Activated CD8-positive, alpha-beta T cell treated with anti-CD3 and anti-CD28 coated beads, Interleukin-2, amount 10 ng/mL, durations not matched to agents 7 days and 5 days (primary cell): ENCODE measurements at regions of chr11 and their contacts with region 1.

Region 1: GRCh38 chr11:75142714-75143419 is 8.0 kb upstream of the SLCO2B1 start:
- DNase-seq: peak; percentile 86
- ATAC-seq: peak; percentile 86
- H3K4me3 Mint-ChIP-seq: peak overlapping the region; percentile 42
- H3K27ac Mint-ChIP-seq: peak overlapping the region; percentile 89
- H3K4me1 Mint-ChIP-seq: peaks cover 58% of the 10 kb centered on the region
- H3K27me3 Mint-ChIP-seq: peaks cover 22% of the 10 kb centered on the region

Region 2: DNA sequence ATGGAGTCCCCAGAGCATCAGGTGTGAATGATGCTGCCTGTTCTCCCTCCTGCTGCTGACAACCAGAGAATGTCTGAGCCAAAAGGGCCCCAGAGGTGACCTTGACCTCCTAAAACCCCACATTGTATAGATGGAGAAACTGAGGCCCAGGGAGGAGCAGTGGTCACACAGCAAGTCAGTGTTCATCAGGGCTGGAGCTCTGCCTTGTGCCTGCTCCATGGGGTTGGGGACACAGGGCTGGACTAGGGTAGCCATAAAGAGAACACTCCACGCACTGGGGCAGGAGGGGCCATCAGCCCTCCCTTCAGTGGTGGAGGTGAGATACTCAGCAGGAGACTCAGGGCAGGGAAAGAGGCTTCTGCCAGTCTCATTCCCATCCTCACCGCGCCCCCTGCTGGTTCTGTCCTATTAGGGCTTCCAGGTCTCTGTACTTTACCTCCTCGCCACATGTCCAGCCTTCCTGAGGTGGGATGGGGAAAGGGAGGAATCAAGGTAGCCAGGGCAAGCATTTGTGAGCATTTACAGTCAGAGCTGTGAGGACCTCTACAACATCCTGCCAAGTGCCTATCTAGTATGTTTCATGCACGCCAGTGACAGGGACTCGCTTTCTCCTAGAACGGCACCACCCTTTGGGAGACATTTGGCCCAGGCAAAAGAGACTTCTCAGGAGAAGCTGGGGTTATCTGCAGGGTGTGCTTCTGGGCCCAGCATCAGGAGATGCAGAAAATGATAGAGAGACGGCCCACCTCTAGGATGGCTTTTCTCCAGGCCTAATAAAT is 110.9 kb before region 1 on chr11:
- CTCF ChIA-PET with region 1: interaction called, 13 read pairs
- POLR2A ChIA-PET with region 1: no interaction called
- DNase-seq: peak; percentile 73
- ATAC-seq: peak; percentile 70
- H3K4me3 Mint-ChIP-seq: no peak overlapping the region
- H3K27ac Mint-ChIP-seq: no peak overlapping the region
- H3K4me1 Mint-ChIP-seq: peaks cover 2% of the 10 kb centered on the region
- H3K27me3 Mint-ChIP-seq: no peaks in the 10 kb centered on the region

Region 3: DNA sequence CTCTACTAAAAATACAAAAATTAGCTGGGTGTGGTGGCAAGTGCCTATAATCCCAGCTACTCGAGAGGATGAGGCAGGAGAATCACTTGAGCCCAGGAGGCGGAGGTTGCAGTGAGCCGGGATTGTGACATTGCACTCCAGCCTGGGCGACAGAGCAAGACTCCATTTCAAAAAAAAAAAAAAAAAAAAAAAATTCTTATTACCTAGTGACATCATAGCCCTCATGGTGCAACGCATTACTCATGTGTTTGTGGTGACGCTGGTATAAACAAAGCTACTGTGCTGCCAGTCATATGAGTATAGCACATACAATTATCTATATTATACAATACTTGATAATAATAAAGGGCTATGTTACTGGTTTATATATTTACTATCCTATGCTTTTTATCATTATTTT is 87.4 kb before region 1 on chr11:
- CTCF ChIA-PET with region 1: no interaction called
- POLR2A ChIA-PET with region 1: no interaction called
- DNase-seq: no peak
- ATAC-seq: no peak
- H3K4me3 Mint-ChIP-seq: no peak overlapping the region
- H3K27ac Mint-ChIP-seq: no peak overlapping the region
- H3K4me1 Mint-ChIP-seq: peaks cover 3% of the 10 kb centered on the region
- H3K27me3 Mint-ChIP-seq: peaks cover 30% of the 10 kb centered on the region

Region 4: DNA sequence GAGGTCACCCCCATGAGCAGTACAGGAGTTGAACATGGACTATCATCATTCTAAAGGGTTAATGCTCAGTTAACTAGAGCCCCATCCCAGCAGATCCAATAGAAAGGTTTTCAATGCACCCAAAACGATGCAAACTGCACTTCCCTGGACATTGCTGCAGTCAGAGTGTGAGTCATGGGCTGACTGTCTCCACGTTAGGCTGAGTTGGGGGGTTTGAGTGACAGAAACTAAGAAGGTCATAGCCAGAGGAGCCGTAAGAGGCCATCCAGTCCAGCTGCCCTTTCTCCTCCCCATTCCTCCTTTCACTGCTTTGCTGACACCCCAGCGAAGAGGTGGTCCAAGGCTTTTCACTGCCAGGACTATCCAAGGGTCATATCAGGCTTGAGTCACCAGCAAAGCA is 35.7 kb before region 1 on chr11:
- CTCF ChIA-PET with region 1: no interaction called
- POLR2A ChIA-PET with region 1: no interaction called
- DNase-seq: no peak
- ATAC-seq: no peak
- H3K4me3 Mint-ChIP-seq: no peak overlapping the region
- H3K27ac Mint-ChIP-seq: no peak overlapping the region
- H3K4me1 Mint-ChIP-seq: peaks cover 3% of the 10 kb centered on the region
- H3K27me3 Mint-ChIP-seq: peaks cover 22% of the 10 kb centered on the region

Region 5: GRCh38 chr11:75126564-75126963 is 16.3 kb before region 1 on chr11:
- CTCF ChIA-PET with region 1: interaction called, 22 read pairs
- POLR2A ChIA-PET with region 1: no interaction called
- DNase-seq: no peak
- ATAC-seq: no peak
- H3K4me3 Mint-ChIP-seq: no peak overlapping the region
- H3K27ac Mint-ChIP-seq: no peak overlapping the region
- H3K4me1 Mint-ChIP-seq: no peaks in the 10 kb centered on the region
- H3K27me3 Mint-ChIP-seq: peaks cover 17% of the 10 kb centered on the region

Region 6: GRCh38 chr11:75204685-75205563 is 62.1 kb after region 1 on chr11:
- CTCF ChIA-PET with region 1: interaction called, 432 read pairs
- POLR2A ChIA-PET with region 1: no interaction called
- DNase-seq: peak; percentile 89
- ATAC-seq: peak; percentile 98
- H3K4me3 Mint-ChIP-seq: no peak overlapping the region
- H3K27ac Mint-ChIP-seq: no peak overlapping the region
- H3K4me1 Mint-ChIP-seq: no peaks in the 10 kb centered on the region
- H3K27me3 Mint-ChIP-seq: peaks cover 2% of the 10 kb centered on the region

Region 7: DNA sequence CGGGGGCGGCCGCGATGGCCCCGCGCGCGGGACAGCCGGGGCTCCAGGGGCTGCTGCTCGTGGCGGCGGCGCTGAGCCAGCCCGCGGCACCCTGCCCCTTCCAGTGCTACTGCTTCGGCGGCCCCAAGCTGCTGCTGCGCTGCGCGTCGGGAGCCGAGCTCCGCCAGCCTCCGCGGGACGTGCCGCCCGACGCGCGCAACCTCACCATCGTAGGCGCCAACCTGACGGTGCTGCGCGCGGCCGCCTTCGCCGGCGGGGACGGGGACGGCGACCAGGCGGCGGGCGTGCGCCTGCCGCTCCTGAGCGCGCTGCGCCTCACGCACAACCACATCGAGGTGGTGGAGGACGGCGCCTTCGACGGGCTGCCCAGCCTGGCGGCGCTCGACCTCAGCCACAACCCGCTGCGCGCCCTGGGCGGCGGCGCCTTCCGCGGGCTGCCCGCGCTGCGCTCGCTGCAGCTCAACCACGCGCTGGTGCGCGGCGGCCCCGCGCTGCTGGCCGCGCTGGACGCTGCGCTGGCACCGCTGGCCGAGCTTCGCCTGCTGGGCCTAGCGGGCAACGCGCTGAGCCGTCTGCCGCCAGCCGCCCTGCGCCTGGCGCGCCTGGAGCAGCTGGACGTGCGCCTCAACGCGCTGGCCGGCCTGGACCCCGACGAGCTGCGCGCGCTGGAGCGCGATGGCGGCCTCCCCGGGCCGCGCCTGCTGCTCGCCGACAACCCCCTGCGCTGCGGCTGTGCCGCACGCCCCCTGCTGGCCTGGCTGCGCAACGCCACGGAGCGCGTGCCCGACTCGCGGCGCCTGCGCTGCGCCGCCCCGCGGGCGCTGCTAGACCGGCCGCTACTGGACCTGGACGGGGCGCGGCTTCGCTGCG is 98.4 kb after region 1 on chr11:
- CTCF ChIA-PET with region 1: interaction called, 538 read pairs
- POLR2A ChIA-PET with region 1: interaction called, 5 read pairs
- DNase-seq: peak; percentile 88
- ATAC-seq: peak; percentile 95
- H3K4me3 Mint-ChIP-seq: peak overlapping the region; percentile 70
- H3K27ac Mint-ChIP-seq: no peak overlapping the region
- H3K4me1 Mint-ChIP-seq: peaks cover 9% of the 10 kb centered on the region
- H3K27me3 Mint-ChIP-seq: peaks cover 54% of the 10 kb centered on the region